Endothelial cell of umbilical vein (primary cell): ENCODE measurements at regions of chr20 and their contacts with region 1.

Region 1: GRCh38 chr20:57383447-57384347 is 7.5 kb upstream of the RBM38 start:
- DNase-seq: no peak
- H3K4me3 ChIP-seq: no peak overlapping the region
- H3K27ac ChIP-seq: no peak overlapping the region
- H3K4me1 ChIP-seq: no peaks in the 10 kb centered on the region
- H3K27me3 ChIP-seq: no peaks in the 10 kb centered on the region
- CTCF ChIP-seq: no peak
- POLR2A ChIP-seq: no peak

Region 2: DNA sequence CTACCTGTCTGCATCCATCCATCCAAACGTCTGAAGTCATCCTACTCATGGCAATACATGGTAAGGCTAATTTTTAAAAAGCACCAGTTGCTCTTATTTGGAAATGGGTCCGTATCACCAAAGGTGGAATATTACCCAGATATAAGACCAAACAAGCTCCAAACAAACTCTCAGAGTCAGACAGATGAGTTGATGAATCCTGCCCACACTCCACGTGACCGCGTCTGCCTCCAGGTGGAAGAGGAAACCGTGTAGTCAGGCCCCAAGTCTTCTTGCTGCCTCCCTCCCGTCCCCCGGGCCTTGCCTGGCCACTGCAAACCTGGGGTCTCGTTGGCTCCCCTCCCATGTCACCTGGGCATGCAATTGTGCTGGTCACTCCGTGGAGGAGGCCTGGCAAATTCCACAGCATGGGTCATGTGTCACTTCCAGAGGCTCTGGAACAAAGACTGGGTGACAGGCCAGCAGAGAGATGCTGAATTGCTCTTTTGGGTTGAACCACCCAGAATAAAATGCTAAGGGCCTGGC is 109.5 kb after region 1 on chr20:
- CTCF ChIA-PET with region 1: interaction called, 86 read pairs
- POLR2A ChIA-PET with region 1: no interaction called
- dilution Hi-C with region 1: no loop called
- intact Hi-C with region 1: loop called (anchors 1 kb)
- DNase-seq: no peak
- H3K4me3 ChIP-seq: no peak overlapping the region
- H3K27ac ChIP-seq: no peak overlapping the region
- H3K4me1 ChIP-seq: peaks cover 2% of the 10 kb centered on the region
- H3K27me3 ChIP-seq: peaks cover 7 to 16% of the 10 kb centered on the region in 2 experiments
- CTCF ChIP-seq: no peak
- POLR2A ChIP-seq: no peak